ENCODE measurements at regions of chr3 and their contacts with region 1.

Region 1: GRCh38 chr3:38101811-38102443 is 35.0 kb downstream of the ACAA1 start:
- DNase-seq: no peak
- ATAC-seq: no peak
- H3K4me3 Mint-ChIP-seq: no peak overlapping the region
- H3K27ac Mint-ChIP-seq: no peak overlapping the region
- H3K4me1 Mint-ChIP-seq: no peaks in the 10 kb centered on the region
- H3K27me3 Mint-ChIP-seq: no peaks in the 10 kb centered on the region

Region 2: GRCh38 chr3:37979541-37980461 is 122.1 kb before region 1 on chr3:
- CTCF ChIA-PET with region 1: no interaction called
- POLR2A ChIA-PET with region 1: no interaction called
- intact Hi-C with region 1: loop called in 1 of 2 experiments (anchors 5 kb)
- DNase-seq: no peak
- ATAC-seq: no peak
- H3K4me3 Mint-ChIP-seq: no peak overlapping the region
- H3K27ac Mint-ChIP-seq: no peak overlapping the region
- H3K4me1 Mint-ChIP-seq: peaks cover under 1% of the 10 kb centered on the region
- H3K27me3 Mint-ChIP-seq: no peaks in the 10 kb centered on the region